Caco-2 (cell line): ENCODE measurements at regions of chr17 and their contacts with region 1.

Region 1: DNA sequence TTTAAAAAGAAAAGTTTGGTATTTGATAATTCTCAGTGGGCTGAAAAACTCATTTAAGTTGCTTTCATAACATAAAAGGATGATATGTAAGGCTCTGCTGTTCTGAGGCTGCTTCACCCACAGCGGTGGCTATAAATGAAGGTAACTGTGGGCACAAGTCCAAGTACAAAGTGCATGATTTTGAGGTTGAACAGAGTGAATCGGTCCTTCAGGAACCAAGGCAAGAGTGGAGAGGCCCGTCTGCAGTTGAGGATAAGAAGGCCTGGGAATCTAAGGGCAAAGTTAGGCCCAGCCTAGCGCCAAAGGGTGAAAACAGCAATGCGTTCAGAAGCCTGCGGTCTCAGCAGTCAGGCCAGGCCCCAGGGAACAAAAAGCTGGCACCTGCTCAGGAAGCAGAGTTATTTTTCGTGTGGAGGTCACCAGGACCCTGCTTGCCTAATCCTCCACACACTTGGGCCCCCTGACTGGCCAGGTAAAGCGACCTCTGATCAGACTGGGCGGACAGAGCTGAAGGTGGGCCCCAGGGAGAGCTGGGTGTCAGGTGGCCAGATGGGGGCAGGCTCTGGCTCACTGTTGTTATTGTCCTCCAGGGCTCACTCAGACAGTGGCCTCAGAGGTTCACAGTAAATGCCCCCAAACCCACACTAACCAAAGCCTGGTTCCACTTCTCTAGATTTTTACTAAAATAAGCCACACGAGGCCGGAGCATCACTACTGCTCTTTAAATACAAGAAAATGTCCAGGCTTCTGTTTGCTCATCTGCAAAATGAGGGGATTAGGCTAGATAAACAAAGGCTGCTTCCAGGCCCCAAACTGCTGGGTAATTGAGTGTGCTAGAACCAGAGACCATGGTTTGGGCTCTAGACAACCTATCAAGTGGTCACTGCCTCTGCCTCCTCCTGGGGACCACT is 46.5 kb downstream of the TEX2 start:
- DNase-seq: peak; percentile 75 to 82
- H3K4me3 ChIP-seq: no peak overlapping the region
- H3K4me3 Mint-ChIP-seq: no peak overlapping the region
- H3K27ac Mint-ChIP-seq: peak overlapping the region; percentile 42
- H3K4me1 ChIP-seq: peaks cover 45% of the 10 kb centered on the region
- H3K4me1 Mint-ChIP-seq: peaks cover 37% of the 10 kb centered on the region
- H3K27me3 ChIP-seq: no peaks in the 10 kb centered on the region
- H3K27me3 Mint-ChIP-seq: no peaks in the 10 kb centered on the region
- CTCF ChIP-seq: peak; percentile 30 to 55

Region 2: DNA sequence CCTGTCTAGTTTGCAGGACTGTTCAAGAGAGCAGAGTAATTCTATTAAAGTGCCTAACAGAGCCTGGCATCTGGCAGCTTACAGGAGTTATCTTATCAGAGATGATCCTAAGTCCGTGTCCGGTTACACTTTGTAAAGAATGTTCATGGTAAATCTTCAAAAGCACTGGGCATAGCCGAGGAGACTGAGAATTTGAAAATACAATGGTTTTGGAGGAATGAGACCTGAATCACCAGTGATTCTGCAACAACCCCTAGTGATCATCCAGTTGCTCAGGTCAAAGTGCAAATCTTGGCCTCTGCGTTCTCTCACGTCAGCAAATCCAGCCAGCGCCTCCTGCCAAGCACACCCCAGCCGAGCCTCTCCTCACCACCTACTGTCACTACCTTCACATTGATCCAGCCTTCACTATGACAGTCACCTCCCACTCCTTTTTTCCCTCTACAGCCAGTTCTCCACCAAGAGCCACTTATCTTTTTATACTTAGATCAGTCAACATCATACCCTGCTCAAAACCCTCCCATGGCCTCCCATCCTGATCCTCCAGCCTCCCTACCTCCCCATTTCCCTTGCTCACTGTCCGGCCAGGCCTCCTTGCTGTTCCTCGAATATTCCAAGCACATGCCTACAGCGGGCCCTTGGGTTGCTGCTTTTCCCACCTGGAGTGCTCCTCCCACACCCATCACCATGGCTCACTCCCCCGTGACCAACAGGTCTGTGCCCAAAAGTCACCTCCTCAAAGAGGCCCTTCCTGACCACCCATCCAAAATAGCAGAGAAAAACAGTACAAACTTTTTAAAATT is 29.3 kb before region 1 on chr17:
- CTCF ChIA-PET with region 1: no interaction called
- POLR2A ChIA-PET with region 1: no interaction called
- intact Hi-C with region 1: loop called (anchors 2 kb)
- DNase-seq: peak; percentile 77 to 81
- H3K4me3 ChIP-seq: no peak overlapping the region
- H3K4me3 Mint-ChIP-seq: peak overlapping the region; percentile 28
- H3K27ac Mint-ChIP-seq: peak overlapping the region; percentile 86
- H3K4me1 ChIP-seq: peaks cover 25% of the 10 kb centered on the region
- H3K4me1 Mint-ChIP-seq: peaks cover 21% of the 10 kb centered on the region
- H3K27me3 ChIP-seq: no peaks in the 10 kb centered on the region
- H3K27me3 Mint-ChIP-seq: no peaks in the 10 kb centered on the region
- CTCF ChIP-seq: no peak

Region 3: GRCh38 chr17:64262417-64263260 is 46.0 kb after region 1 on chr17 and contains the start of gene TEX2:
- CTCF ChIA-PET with region 1: no interaction called
- POLR2A ChIA-PET with region 1: no interaction called
- intact Hi-C with region 1: loop called (anchors 2 kb)
- DNase-seq: peak; percentile 54 to 66
- H3K4me3 ChIP-seq: peak within 1 kb of the TSS; percentile 83
- H3K4me3 Mint-ChIP-seq: peak within 1 kb of the TSS; percentile 98
- H3K27ac Mint-ChIP-seq: peak within 1 kb of the TSS; percentile 53
- H3K4me1 ChIP-seq: peaks cover 15% of the 10 kb centered on the region
- H3K4me1 Mint-ChIP-seq: peaks cover 12% of the 10 kb centered on the region
- H3K27me3 ChIP-seq: no peaks in the 10 kb centered on the region
- H3K27me3 Mint-ChIP-seq: peaks cover 4% of the 10 kb centered on the region
- CTCF ChIP-seq: no peak
- total RNA-seq, gene TEX2: 19.3 and 20.2 TPM in 2 replicates